ENCODE measurements at regions of chr15 and their contacts with region 1.

Region 1: DNA sequence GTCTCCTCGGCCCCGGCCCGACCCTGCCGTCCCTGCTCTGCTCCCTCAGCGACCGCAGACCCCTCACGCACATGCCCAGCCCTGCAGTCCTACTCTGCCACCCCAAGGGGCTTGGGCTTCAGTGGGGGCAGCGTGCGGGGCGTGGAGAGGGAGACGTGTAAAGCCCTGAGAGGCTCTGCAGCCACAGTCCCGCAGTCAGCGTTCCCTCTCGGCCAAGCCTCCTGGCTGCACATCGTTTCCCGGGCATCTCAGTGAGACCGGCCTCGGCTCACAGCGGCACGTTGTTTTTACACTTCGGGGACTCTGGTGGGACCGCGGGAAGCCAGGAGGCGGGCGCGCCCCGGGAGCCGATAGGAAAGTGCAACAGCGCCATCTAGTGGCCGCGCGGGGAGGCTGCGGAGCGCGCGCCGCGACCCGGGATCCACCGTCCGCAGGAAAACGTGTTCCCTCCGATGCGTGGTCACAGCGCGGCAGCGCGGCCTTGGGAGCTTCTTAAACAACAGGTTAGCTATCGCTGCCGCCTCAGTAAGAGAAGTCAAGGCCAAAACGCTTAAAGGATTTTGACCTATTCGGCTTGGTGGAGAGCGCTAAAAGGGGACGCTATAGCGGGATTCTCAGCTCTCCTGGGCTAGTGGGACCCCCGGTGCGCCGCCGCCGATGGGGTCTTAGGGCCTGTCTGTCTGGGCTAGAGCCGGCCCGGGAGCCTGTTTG is 226.8 kb upstream of the IGF1R start:
- DNase-seq: peak; percentile 62
- H3K4me3 Mint-ChIP-seq: peak overlapping the region; percentile 6
- H3K27ac Mint-ChIP-seq: no peak overlapping the region
- H3K4me1 Mint-ChIP-seq: peaks cover 7% of the 10 kb centered on the region
- H3K27me3 Mint-ChIP-seq: peaks cover 62% of the 10 kb centered on the region

Region 2: GRCh38 chr15:97903971-97904572 is 517.5 kb before region 1 on chr15:
- CTCF ChIA-PET with region 1: interaction called, 6 read pairs
- intact Hi-C with region 1: loop called (anchors 1 kb)
- DNase-seq: peak; percentile 41
- H3K4me3 Mint-ChIP-seq: no peak overlapping the region
- H3K27ac Mint-ChIP-seq: no peak overlapping the region
- H3K4me1 Mint-ChIP-seq: no peaks in the 10 kb centered on the region
- H3K27me3 Mint-ChIP-seq: peaks cover 40% of the 10 kb centered on the region

Region 3: DNA sequence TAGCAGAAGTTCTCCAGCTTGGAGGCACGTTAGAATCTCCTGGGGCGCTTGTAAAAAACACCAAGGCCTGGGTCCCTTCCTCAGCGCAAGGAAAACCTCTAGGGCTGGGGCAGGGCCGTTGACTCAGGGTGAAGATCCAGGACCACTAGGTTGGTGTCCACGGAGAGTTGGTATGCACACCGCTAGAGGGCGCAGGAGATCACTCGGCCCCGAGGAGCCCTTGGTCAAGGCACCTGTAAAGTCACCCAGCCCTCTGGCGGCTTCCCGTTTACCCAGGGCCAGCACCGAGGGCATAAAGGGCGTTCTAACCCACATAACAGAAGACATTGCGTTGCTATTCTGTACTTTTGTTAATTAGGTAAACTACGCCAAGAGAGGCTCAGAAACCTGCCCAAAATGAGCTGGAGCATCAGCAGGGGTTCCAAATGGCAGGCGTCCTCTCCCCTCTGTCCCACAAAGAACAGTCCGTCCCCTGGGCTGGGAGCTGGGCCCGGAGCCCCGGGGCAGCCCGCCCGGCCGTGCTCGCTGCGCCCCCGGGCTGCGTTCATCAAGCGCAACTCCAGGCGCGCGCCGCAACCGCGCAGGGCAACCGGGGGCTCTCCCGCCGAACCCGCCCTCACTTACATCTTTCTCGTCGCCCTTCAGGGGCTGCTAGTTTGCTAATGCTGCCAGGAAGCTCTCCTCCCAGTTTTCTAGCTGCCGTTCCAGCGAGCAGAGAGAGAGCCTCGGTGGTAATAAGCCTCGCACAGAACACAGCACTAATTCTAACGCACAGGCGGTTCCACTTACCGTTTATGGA is 128.9 kb before region 1 on chr15:
- CTCF ChIA-PET with region 1: interaction called, 9 read pairs
- intact Hi-C with region 1: loop called (anchors 5 kb)
- DNase-seq: peak; percentile 71
- H3K4me3 Mint-ChIP-seq: no peak overlapping the region
- H3K27ac Mint-ChIP-seq: no peak overlapping the region
- H3K4me1 Mint-ChIP-seq: peaks cover 6% of the 10 kb centered on the region
- H3K27me3 Mint-ChIP-seq: peaks cover 37% of the 10 kb centered on the region

Region 4: DNA sequence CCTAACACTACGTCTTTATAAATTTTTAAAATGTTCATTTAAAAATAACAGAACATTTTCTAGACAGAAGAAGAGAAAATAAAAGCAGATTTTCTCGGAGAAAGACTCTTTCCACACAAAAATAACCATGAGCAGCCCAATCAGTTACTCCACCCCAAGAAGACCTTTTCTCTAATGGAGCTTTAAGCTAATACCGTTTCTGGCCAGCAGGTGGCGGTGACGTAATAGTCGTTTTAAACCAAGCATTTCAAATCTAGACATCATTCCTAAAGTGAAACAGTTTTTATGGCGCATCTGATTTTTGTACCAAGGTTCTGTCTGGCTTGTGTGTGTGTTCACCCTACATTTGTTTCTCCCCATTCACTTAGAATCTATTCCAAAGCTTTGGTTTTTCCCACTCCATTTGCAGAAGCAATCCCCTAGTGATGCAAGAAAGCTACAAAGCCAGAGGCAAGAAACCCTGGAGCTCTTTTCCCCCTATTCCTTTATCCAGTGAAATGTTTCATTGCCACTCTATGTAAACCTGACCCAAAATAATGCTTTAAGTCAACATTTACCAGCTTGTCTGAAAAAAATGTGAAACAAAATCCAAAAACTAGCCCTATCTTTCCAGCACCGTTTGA is 109.9 kb before region 1 on chr15:
- CTCF ChIA-PET with region 1: interaction called, 66 read pairs
- intact Hi-C with region 1: loop called (anchors 1 kb)
- DNase-seq: peak; percentile 90
- H3K4me3 Mint-ChIP-seq: no peak overlapping the region
- H3K27ac Mint-ChIP-seq: no peak overlapping the region
- H3K4me1 Mint-ChIP-seq: no peaks in the 10 kb centered on the region
- H3K27me3 Mint-ChIP-seq: peaks cover 18% of the 10 kb centered on the region

Region 5: DNA sequence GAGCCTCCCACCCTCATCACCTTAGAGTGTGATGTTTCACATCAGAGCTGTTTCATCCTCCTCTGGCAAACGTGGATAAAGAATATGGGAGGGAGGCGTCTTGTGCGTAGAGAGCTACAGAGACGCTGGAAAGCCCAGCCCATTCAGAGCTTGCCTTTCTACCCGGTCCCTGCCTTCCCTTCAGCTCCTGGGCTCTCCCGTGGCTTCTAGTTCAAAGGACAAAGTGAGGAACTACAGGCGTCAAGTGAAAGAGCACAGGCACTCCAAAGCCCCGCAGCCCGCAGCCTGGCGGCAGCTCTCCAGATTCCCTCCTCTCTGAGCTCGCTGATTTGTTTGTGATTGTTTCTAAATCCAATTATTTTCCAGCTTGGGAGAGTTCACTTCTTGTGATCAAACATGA is 29.7 kb after region 1 on chr15:
- CTCF ChIA-PET with region 1: interaction called, 15 read pairs
- intact Hi-C with region 1: no loop called
- DNase-seq: no peak
- H3K4me3 Mint-ChIP-seq: no peak overlapping the region
- H3K27ac Mint-ChIP-seq: no peak overlapping the region
- H3K4me1 Mint-ChIP-seq: no peaks in the 10 kb centered on the region
- H3K27me3 Mint-ChIP-seq: no peaks in the 10 kb centered on the region

Region 6: GRCh38 chr15:98779463-98780071 is 358.0 kb after region 1 on chr15:
- CTCF ChIA-PET with region 1: no interaction called
- intact Hi-C with region 1: no loop called
- DNase-seq: peak; percentile 86
- H3K4me3 Mint-ChIP-seq: peak overlapping the region; percentile 51
- H3K27ac Mint-ChIP-seq: no peak overlapping the region
- H3K4me1 Mint-ChIP-seq: peaks cover 49% of the 10 kb centered on the region
- H3K27me3 Mint-ChIP-seq: no peaks in the 10 kb centered on the region

Region 7: GRCh38 chr15:98937413-98938104 is 516.0 kb after region 1 on chr15:
- CTCF ChIA-PET with region 1: no interaction called
- intact Hi-C with region 1: no loop called
- DNase-seq: no peak
- H3K4me3 Mint-ChIP-seq: no peak overlapping the region
- H3K27ac Mint-ChIP-seq: no peak overlapping the region
- H3K4me1 Mint-ChIP-seq: peaks cover 5% of the 10 kb centered on the region
- H3K27me3 Mint-ChIP-seq: no peaks in the 10 kb centered on the region

Measured in activated naive CD4-positive, alpha-beta T cell treated with anti-CD3 and anti-CD28 coated beads for 36 hours (primary cell).